ENCODE measurements at regions of chr2 and their contacts with region 1.

Region 1: GRCh38 chr2:19673213-19673791 is 228.5 kb downstream of the TTC32 start:
- DNase-seq: peak; percentile 61
- ATAC-seq: peak; percentile 48

Region 2: GRCh38 chr2:19632403-19632991 is 40.8 kb before region 1 on chr2:
- intact Hi-C with region 1: loop called (anchors 5 kb)
- DNase-seq: peak; percentile 73
- ATAC-seq: peak; percentile 94

Region 3: DNA sequence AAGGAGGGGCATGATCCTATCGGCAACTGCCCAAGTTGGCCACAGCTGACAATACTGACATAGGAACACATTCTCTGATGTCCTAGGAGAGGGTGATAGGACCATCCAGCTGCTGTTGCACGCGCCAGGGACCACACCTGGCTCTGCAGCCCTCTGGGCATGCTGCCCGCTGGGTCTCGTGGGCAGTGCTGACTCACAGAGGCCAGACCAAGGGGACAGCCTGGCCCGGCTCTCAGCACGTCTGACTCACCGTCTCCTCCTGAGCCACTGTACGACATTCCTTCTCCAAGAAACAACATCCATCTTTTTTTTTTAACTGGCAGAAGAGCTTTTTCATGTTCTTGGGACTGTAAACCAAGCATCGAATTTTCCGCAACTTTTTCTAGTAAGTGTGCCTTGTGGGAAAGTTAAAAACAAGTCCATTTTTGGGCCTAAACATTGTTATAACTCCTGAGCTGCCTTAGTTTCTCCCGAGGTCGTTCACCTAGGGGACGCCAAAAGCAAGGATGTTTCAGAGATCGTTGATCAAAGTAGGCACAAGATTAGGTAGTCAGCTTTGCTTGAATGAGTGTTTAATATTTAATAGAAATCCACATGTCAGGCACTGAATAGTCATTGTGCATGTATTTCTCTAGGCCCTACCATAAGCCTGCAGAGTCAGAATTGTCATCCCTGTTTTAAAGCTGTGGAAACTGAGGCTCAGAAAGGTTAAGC is 128.2 kb after region 1 on chr2:
- intact Hi-C with region 1: loop called (anchors 10 kb)
- DNase-seq: peak; percentile 86
- ATAC-seq: peak; percentile 93

Region 4: GRCh38 chr2:20350753-20351554 is 677.7 kb after region 1 on chr2 and contains the start of gene PUM2:
- intact Hi-C with region 1: no loop called
- DNase-seq: peak; percentile 97
- ATAC-seq: peak; percentile 99
- total RNA-seq, gene PUM2: 71.4 TPM